ENCODE measurements at regions of chr2 and their contacts with region 1.

Region 1: GRCh38 chr2:46364797-46365457 is 67.7 kb downstream of the EPAS1 start:
- H3K4me3 ChIP-seq: no peak overlapping the region
- H3K27ac ChIP-seq: no peak overlapping the region
- H3K4me1 ChIP-seq: no peaks in the 10 kb centered on the region
- CTCF ChIP-seq: peak; percentile 15; the same call in 1 of the 2 replicates

Region 2: GRCh38 chr2:46010925-46011490 is 353.9 kb before region 1 on chr2:
- CTCF ChIA-PET with region 1: interaction called, 16 read pairs
- POLR2A ChIA-PET with region 1: no interaction called
- H3K4me3 ChIP-seq: no peak overlapping the region
- H3K27ac ChIP-seq: no peak overlapping the region
- H3K4me1 ChIP-seq: no peaks in the 10 kb centered on the region
- CTCF ChIP-seq: 0 out of 2 replicates have a peak, but pooled peaks have one; percentile 25

Region 3: GRCh38 chr2:47283659-47284058 is 918.7 kb after region 1 on chr2:
- CTCF ChIA-PET with region 1: no interaction called
- POLR2A ChIA-PET with region 1: no interaction called
- H3K4me3 ChIP-seq: no peak overlapping the region
- H3K27ac ChIP-seq: no peak overlapping the region
- H3K4me1 ChIP-seq: peaks cover 3% of the 10 kb centered on the region; the same call in 1 of the 2 replicates
- CTCF ChIP-seq: no peak